Activated naive CD4-positive, alpha-beta T cell treated with anti-CD3 and anti-CD28 coated beads for 36 hours (primary cell): ENCODE measurements at regions of chr4 and their contacts with region 1.

Region 1: DNA sequence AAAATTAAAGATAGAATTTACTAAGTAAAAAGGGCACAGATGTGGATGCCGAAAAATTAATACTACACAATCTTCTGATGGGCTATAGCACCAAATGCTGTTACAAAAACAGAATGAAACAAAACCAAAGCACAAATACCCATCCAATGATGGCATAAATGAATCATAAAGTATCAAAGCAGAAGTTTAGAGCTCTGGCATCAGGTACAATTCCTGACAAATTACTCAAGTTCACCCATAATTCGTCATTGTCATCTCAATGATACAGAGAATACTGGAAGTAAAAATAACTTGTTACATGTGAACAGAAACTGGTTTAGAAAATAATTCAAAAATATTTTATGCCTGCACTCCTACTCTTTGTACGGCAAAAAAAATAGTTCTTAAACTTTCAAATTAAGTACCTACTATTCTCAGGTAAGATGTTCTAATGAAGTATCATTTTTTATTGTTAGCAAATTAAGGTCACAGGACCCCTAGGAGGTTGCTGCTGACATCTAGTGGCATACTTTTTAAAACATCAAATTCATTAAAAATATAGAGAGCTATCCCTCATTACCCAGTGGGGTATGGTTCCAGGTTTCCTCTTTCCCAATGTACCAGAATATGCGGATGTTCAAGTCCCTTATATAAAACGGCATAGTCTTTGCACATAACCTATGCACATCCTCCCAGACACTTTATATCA is 126.1 kb downstream of the INPP4B start:
- DNase-seq: no peak
- H3K4me3 Mint-ChIP-seq: no peak overlapping the region
- H3K27ac Mint-ChIP-seq: peak overlapping the region; percentile 84
- H3K4me1 Mint-ChIP-seq: peaks cover 42% of the 10 kb centered on the region
- H3K27me3 Mint-ChIP-seq: no peaks in the 10 kb centered on the region

Region 2: DNA sequence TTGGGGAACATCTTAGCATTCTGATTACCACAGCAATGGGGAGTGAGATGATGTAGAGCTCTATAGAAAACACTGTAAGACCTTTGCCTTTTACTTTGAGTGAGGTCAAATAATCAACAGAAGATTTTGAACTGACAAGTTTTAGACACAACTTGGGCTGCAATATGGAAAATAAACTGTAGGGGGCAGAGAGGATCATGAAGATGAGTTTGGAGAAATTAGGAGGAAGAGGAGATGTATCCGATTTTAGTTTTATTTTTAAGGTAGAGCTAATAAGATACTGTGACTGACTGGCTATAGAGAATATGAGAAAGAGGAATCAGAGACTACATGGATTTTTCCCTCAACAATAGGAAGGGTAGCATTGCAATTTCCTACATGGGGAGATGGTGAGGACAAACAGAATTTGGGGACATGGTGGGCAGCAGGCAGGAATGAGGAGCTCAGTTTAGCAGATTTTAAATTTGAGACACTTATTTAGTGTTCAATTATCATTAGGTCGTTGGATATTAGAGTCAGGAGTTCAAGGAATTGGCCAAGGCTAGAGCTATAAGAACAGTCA is 437.0 kb before region 1 on chr4:
- CTCF ChIA-PET with region 1: interaction called, 16 read pairs
- intact Hi-C with region 1: loop called (anchors 1 kb)
- DNase-seq: peak; percentile 60
- H3K4me3 Mint-ChIP-seq: no peak overlapping the region
- H3K27ac Mint-ChIP-seq: no peak overlapping the region
- H3K4me1 Mint-ChIP-seq: peaks cover 29% of the 10 kb centered on the region
- H3K27me3 Mint-ChIP-seq: no peaks in the 10 kb centered on the region

Region 3: DNA sequence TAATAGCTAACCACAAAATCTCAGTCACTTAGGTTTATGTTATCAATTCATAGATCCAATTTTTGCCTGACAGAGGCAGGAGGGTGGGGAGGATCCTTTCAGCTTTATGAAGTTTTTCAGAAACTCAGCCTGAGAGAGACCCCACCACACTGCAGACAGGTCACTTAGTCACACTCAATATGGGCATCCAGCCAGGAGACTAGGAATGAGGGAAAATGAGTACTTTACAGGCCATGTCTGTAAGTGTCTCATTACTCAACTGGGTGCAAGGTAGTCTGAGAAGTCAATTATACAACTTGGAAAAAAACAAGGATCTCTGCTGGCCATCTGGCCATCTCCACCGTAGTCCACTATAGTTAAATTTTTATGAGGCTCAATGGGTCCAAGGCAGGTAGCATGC is 239.8 kb before region 1 on chr4:
- CTCF ChIA-PET with region 1: interaction called, 3 read pairs
- intact Hi-C with region 1: loop called (anchors 1 kb)
- DNase-seq: no peak
- H3K4me3 Mint-ChIP-seq: no peak overlapping the region
- H3K27ac Mint-ChIP-seq: no peak overlapping the region
- H3K4me1 Mint-ChIP-seq: peaks cover 27% of the 10 kb centered on the region
- H3K27me3 Mint-ChIP-seq: no peaks in the 10 kb centered on the region

Region 4: DNA sequence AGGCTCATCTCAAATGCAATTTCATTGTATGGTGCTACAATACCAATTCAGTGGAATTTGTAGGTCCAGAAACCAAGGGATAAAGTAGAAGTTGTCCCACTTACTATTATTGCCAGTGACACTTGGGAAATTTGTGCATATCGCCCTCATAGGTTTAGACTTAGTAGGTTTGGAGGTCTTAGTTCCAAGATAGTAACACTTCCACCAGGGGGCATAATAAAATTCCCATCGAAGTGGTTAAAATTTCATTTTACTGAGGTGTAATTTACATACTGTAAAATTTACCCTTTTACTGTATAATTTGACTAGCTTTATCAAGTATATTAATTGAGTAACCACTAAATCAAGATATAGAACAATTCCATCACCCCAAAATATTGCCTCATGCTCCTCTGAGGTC is 48.5 kb before region 1 on chr4:
- CTCF ChIA-PET with region 1: no interaction called
- intact Hi-C with region 1: loop called (anchors 2 kb)
- DNase-seq: no peak
- H3K4me3 Mint-ChIP-seq: no peak overlapping the region
- H3K27ac Mint-ChIP-seq: no peak overlapping the region
- H3K4me1 Mint-ChIP-seq: peaks cover 7% of the 10 kb centered on the region
- H3K27me3 Mint-ChIP-seq: no peaks in the 10 kb centered on the region

Region 5: DNA sequence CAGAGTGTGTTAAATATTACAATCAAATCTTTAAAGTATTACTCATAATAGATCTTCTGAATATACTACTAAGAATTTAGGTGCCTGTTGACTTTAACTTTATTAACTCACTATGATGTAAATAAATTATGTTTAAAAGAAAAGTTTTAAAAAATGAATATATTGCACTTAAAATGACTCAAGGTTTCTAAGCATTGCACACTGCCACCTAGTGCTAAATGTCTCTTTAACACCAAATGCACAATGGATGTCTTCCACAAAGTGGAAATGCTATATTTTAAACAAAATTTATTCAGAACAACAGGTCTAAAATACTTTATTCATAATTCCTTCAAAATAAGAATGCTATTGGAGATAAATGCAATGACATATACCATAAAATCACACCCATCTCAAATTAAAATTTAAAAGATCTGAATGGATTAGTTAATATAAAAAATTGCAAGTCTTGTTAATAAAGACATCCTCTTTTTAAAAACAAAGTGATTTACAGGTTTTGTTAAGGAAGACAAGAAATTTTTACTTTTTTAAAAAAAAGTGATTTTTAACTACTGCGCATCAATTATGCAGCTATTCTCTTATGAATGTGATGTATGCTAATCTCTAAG is 120.6 kb after region 1 on chr4:
- CTCF ChIA-PET with region 1: interaction called, 11 read pairs
- intact Hi-C with region 1: loop called (anchors 1 kb)
- DNase-seq: no peak
- H3K4me3 Mint-ChIP-seq: no peak overlapping the region
- H3K27ac Mint-ChIP-seq: no peak overlapping the region
- H3K4me1 Mint-ChIP-seq: peaks cover 31% of the 10 kb centered on the region
- H3K27me3 Mint-ChIP-seq: no peaks in the 10 kb centered on the region

Region 6: GRCh38 chr4:143294310-143294709 is 574.3 kb after region 1 on chr4:
- CTCF ChIA-PET with region 1: no interaction called
- intact Hi-C with region 1: no loop called
- DNase-seq: no peak
- H3K4me3 Mint-ChIP-seq: no peak overlapping the region
- H3K27ac Mint-ChIP-seq: no peak overlapping the region
- H3K4me1 Mint-ChIP-seq: no peaks in the 10 kb centered on the region
- H3K27me3 Mint-ChIP-seq: no peaks in the 10 kb centered on the region